GM12878 (cell line): ENCODE measurements at regions of chr5 and their contacts with region 1.

Region 1: GRCh38 chr5:1536322-1536845 is 12.6 kb upstream of the LPCAT1 start:
- DNase-seq: peak; percentile 72
- ATAC-seq: peak; percentile 99
- H3K4me3 ChIP-seq: peak overlapping the region; percentile 41; the same call in 1 of the 2 replicates
- H3K27ac ChIP-seq: peak overlapping the region; percentile 54
- H3K4me1 ChIP-seq: peaks cover 9% of the 10 kb centered on the region; the same call in 1 of the 2 replicates
- H3K27me3 ChIP-seq: no peaks in the 10 kb centered on the region
- CTCF ChIP-seq: no peak
- EP300 ChIP-seq: no peak
- POLR2A ChIP-seq: peak; percentile 63
- RAD21 ChIP-seq: no peak

Region 2: GRCh38 chr5:1503241-1504068 is 32.9 kb before region 1 on chr5:
- CTCF ChIA-PET with region 1: interaction called, 7 read pairs
- POLR2A ChIA-PET with region 1: interaction called, 11 read pairs
- RAD21 ChIA-PET with region 1: interaction called, 18 read pairs
- SMC1A ChIA-PET with region 1: interaction called, 18 read pairs
- in situ Hi-C with region 1: no loop called
- intact Hi-C with region 1: no loop called
- DNase-seq: no peak
- ATAC-seq: peak; percentile 42
- H3K4me3 ChIP-seq: peak overlapping the region; percentile 55
- H3K27ac ChIP-seq: peak overlapping the region; percentile 93
- H3K4me1 ChIP-seq: peaks cover 81% of the 10 kb centered on the region
- H3K27me3 ChIP-seq: no peaks in the 10 kb centered on the region
- CTCF ChIP-seq: no peak
- EP300 ChIP-seq: no peak
- POLR2A ChIP-seq: no peak
- RAD21 ChIP-seq: no peak

Region 3: GRCh38 chr5:1513326-1514021 is 22.9 kb before region 1 on chr5:
- CTCF ChIA-PET with region 1: no interaction called
- POLR2A ChIA-PET with region 1: no interaction called
- RAD21 ChIA-PET with region 1: no interaction called
- SMC1A ChIA-PET with region 1: no interaction called
- in situ Hi-C with region 1: no loop called
- intact Hi-C with region 1: no loop called
- DNase-seq: no peak
- ATAC-seq: no peak
- H3K4me3 ChIP-seq: no peak overlapping the region
- H3K27ac ChIP-seq: no peak overlapping the region
- H3K4me1 ChIP-seq: peaks cover 4% of the 10 kb centered on the region
- H3K27me3 ChIP-seq: no peaks in the 10 kb centered on the region
- CTCF ChIP-seq: no peak
- EP300 ChIP-seq: no peak
- POLR2A ChIP-seq: no peak
- RAD21 ChIP-seq: no peak

Region 4: DNA sequence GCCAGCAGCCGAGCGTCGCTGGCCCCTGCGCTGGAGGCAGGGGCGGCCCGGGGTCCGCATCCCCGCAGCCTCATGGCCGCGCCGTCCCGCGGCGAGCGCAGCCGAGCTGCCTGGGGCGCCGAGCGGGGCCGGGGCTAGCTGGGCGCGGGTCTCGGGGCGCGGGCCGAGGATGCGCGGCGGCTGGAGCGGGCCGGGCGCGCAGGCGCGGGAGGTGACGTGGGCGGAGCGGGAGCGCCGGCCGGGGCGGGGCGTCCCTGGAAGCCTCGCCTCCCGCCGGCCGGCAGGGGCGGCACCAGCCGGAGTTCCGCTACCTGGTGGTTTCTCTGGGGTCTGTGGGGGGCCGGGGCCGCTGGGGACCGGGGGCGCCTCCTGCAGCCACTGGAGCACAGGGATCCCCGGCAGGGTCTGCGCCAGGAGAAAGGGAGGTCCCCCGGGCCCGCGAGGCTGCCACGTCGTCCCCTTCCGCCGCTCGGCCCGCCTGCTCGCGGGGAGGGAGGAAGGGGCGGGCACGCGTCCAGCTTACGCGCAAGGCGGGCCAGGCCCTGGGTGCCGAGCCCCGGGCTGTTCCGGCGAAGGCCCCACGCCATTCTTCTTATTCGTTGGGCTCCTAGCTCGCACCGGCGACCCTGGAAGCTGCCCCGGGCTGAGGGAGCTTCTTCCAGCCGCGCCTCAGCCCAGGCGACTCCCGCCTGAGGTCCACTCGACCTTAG is 12.5 kb before region 1 on chr5 and contains the start of gene LPCAT1:
- CTCF ChIA-PET with region 1: interaction called, 3 read pairs
- POLR2A ChIA-PET with region 1: interaction called, 7 read pairs
- RAD21 ChIA-PET with region 1: interaction called, 8 read pairs
- SMC1A ChIA-PET with region 1: interaction called, 20 read pairs
- in situ Hi-C with region 1: no loop called
- intact Hi-C with region 1: no loop called
- DNase-seq: no peak
- ATAC-seq: peak; percentile 89
- H3K4me3 ChIP-seq: peak within 1 kb of the TSS; percentile 88
- H3K27ac ChIP-seq: peak within 1 kb of the TSS; percentile 78
- H3K4me1 ChIP-seq: peaks cover 16% of the 10 kb centered on the region
- H3K27me3 ChIP-seq: no peaks in the 10 kb centered on the region
- CTCF ChIP-seq: 0 out of 6 replicates have a peak, but pooled peaks of 1 of the 3 experiments have one; percentile 5
- EP300 ChIP-seq: no peak
- POLR2A ChIP-seq: peak; percentile 86
- RAD21 ChIP-seq: no peak
- polyA plus RNA-seq, gene LPCAT1: 2.3 to 7.0 TPM

Region 5: DNA sequence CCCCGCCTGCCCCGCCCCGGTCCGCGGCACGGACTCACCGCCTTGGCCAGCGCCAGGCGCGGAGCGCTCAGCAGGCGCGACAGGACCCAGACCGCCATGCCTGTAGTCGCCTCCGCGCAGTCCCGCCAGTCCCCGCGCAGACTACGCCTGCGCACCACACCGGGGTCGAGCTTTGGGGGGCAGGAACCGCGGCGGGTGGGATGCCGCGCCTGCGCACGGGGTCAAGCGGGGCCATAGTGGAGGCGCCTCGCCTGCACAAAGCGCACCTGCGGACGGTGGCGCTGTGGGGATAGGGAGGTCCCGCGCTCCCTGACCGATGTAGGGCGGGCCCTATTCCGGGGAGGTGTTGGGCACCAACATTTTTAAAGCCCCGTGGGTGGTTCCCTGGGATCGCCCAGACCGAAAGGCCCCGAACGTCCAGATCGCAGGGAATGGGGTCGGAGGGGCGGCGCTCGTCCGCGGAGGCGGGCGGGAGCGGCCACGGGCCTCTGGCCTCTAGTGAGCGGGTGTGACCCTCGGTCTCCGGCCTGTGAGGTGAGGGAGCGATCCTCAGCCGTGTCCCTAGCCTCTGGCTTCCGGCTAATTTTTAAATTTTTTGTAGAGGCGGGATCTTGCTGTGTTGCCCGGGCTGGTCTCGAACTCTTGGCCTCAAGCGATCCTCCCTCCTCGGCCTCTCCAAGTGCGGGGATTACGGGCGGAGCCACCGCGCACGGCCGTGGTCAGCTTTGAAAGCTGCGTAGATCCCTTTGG is 58.1 kb after region 1 on chr5:
- CTCF ChIA-PET with region 1: interaction called, 9 read pairs
- POLR2A ChIA-PET with region 1: interaction called, 5 read pairs
- RAD21 ChIA-PET with region 1: no interaction called
- SMC1A ChIA-PET with region 1: no interaction called
- in situ Hi-C with region 1: no loop called
- intact Hi-C with region 1: loop called (anchors 5 kb)
- DNase-seq: peak; percentile 70
- ATAC-seq: peak; percentile 97
- H3K4me3 ChIP-seq: peak overlapping the region; percentile 95
- H3K27ac ChIP-seq: peak overlapping the region; percentile 41
- H3K4me1 ChIP-seq: no peaks in the 10 kb centered on the region
- H3K27me3 ChIP-seq: no peaks in the 10 kb centered on the region
- CTCF ChIP-seq: peak; percentile 64 to 79 (median 78)
- EP300 ChIP-seq: no peak
- POLR2A ChIP-seq: peak; percentile 89
- RAD21 ChIP-seq: peak; percentile 40